ENCODE measurements at regions of chr6 and their contacts with region 1.

Region 1: DNA sequence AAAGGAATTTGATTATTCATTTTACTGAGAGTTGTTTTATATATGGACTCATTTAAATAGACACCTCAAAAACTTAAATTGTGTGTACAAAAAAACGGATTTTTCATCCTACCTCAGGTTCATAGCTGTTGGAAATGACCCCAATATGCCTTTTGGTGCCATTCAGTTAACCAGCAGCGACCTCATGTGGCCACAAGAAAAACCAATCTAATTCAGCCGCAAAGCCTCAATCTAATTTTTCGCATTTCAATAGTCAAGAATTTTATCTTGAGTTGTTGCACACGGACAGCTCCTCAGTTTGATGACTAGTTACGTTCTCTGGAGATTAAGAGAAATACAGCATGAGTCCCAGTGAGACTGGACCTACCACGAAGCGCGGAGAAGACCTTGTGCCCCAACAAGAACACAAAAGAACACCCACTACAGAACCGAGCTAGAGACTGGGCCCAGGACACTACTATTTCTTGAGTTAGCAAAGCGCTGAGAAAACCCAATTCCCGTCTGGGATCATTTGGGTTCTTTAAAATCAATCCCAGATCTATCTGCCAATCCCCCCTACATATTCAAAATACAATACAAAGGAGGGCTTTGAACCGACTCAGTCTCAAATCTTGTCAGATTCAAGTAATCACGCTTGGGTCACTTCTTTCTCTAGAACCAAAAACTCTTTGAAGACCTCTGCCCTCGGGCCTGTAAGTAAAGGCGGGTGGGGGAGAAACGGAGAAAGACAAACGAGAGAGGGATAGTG is 1.1 kb downstream of the TCP11 start:
- DNase-seq: peak; percentile 32
- ATAC-seq: peak; percentile 74
- H3K4me3 ChIP-seq: no peak overlapping the region
- H3K27ac ChIP-seq: no peak overlapping the region
- H3K4me1 ChIP-seq: peaks cover 3% of the 10 kb centered on the region; the same call in 1 of the 2 replicates
- H3K27me3 ChIP-seq: no peaks in the 10 kb centered on the region
- CTCF ChIP-seq: peak; percentile 68 to 89 (median 77)
- EP300 ChIP-seq: no peak
- POLR2A ChIP-seq: no peak
- RAD21 ChIP-seq: peak; percentile 95

Region 2: GRCh38 chr6:34526992-34527728 is 612.9 kb before region 1 on chr6:
- CTCF ChIA-PET with region 1: no interaction called
- POLR2A ChIA-PET with region 1: no interaction called
- RAD21 ChIA-PET with region 1: interaction called, 3 read pairs
- SMC1A ChIA-PET with region 1: no interaction called
- in situ Hi-C with region 1: no loop called
- intact Hi-C with region 1: loop called (anchors 5 kb)
- DNase-seq: peak; percentile 54
- ATAC-seq: peak; percentile 99
- H3K4me3 ChIP-seq: no peak overlapping the region
- H3K27ac ChIP-seq: no peak overlapping the region
- H3K4me1 ChIP-seq: no peaks in the 10 kb centered on the region
- H3K27me3 ChIP-seq: no peaks in the 10 kb centered on the region
- CTCF ChIP-seq: peak; percentile 49 to 82 (median 77)
- EP300 ChIP-seq: no peak
- POLR2A ChIP-seq: 0 out of 2 replicates have a peak, but pooled peaks have one; percentile 38
- RAD21 ChIP-seq: peak; percentile 40; the same call in 1 of the 2 replicates

Region 3: DNA sequence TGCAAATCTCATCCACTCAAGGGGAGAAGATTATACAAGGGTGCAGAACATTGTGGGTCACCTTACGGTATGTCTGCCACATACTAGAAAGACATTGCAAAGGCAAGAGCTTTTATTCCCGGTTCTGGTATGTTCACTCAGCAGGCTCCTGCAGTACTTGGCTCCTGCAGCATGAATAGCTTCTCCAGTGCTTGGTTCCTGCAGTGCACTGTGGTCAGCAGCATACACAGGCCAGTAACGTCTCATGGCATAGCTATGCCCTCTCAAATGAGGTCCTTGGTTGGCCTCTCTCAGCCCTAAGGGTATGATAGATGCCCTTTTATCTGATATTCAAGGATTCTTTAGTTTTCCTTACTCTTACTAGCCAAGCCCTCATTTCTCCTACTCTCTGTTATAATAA is 11.6 kb before region 1 on chr6:
- CTCF ChIA-PET with region 1: interaction called, 19 read pairs
- POLR2A ChIA-PET with region 1: no interaction called
- RAD21 ChIA-PET with region 1: interaction called, 5 read pairs
- SMC1A ChIA-PET with region 1: interaction called, 7 read pairs
- in situ Hi-C with region 1: no loop called
- intact Hi-C with region 1: no loop called
- DNase-seq: no peak
- ATAC-seq: no peak
- H3K4me3 ChIP-seq: no peak overlapping the region
- H3K27ac ChIP-seq: no peak overlapping the region
- H3K4me1 ChIP-seq: no peaks in the 10 kb centered on the region
- H3K27me3 ChIP-seq: no peaks in the 10 kb centered on the region
- CTCF ChIP-seq: no peak
- EP300 ChIP-seq: no peak
- POLR2A ChIP-seq: no peak
- RAD21 ChIP-seq: no peak

Region 4: DNA sequence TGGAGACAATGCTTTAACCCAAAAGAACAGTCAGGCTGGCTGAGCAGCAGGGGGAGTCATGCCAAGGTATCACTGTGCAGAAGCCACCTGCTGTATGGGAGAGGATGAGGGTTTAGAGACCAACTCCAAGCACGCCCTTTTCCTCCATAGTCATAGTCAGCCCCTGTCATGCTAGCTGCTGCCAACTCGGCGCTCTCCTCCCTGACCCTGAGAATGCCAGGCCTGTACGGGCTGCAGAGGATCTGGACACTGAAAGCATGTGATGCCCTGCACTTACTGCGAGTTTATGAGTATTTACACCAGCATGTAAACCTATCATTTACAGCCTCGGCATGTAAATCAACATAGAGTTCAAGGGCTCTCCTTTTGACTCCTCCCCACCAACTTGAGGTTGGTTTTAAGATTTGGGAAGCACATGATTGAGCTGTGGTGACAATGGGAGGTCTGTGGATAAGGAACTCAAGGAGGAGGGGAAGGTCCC is 62.0 kb after region 1 on chr6:
- CTCF ChIA-PET with region 1: interaction called, 114 read pairs
- POLR2A ChIA-PET with region 1: no interaction called
- RAD21 ChIA-PET with region 1: interaction called, 3 read pairs
- SMC1A ChIA-PET with region 1: interaction called, 65 read pairs
- in situ Hi-C with region 1: no loop called
- intact Hi-C with region 1: no loop called
- DNase-seq: no peak
- ATAC-seq: 0 out of 3 replicates have a peak, but pooled peaks have one; percentile 17
- H3K4me3 ChIP-seq: no peak overlapping the region
- H3K27ac ChIP-seq: no peak overlapping the region
- H3K4me1 ChIP-seq: no peaks in the 10 kb centered on the region
- H3K27me3 ChIP-seq: no peaks in the 10 kb centered on the region; a peak in 4 of 4 replicates
- CTCF ChIP-seq: no peak
- EP300 ChIP-seq: no peak
- POLR2A ChIP-seq: no peak
- RAD21 ChIP-seq: no peak